HepG2 (cell line): ENCODE measurements at regions of chr7 and their contacts with region 1.

Region 1: GRCh38 chr7:5450549-5451372 is 27.1 kb upstream of the TNRC18 start:
- DNase-seq: peak; percentile 53
- ATAC-seq: peak; percentile 75
- H3K4me3 ChIP-seq: no peak overlapping the region; a peak in 2 of 6 replicates
- H3K27ac ChIP-seq: no peak overlapping the region
- H3K4me1 ChIP-seq: peaks cover 48% of the 10 kb centered on the region
- H3K27me3 ChIP-seq: peaks cover 0 to 4% of the 10 kb centered on the region in 2 experiments; a peak in 4 of 5 replicates
- CTCF ChIP-seq: peak; percentile 95
- EP300 ChIP-seq: no peak
- POLR2A ChIP-seq: no peak
- RAD21 ChIP-seq: peak; percentile 95

Region 2: DNA sequence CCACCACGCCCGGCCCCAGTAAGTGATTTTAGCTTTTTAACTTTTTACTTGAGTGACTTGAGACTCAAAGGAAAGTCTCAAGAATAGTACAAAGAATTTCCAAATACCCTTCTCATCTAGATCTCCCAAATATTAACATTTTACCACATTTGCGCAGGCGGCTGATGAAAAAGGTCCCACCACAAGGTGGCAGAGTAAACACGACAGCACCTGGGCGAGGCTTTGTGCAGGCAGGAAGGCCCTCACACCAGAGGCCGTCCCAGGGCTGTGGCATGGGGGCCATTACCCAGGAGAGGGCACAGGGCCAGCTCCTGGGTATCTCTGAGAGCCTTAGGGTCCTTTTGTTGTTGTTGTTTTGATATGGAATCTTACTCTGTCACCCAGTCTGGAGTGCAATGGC is 310.8 kb before region 1 on chr7:
- CTCF ChIA-PET with region 1: no interaction called
- POLR2A ChIA-PET with region 1: no interaction called
- in situ Hi-C with region 1: loop called (anchors 25 kb)
- intact Hi-C with region 1: no loop called
- DNase-seq: peak; percentile 32
- ATAC-seq: peak; percentile 76
- H3K4me3 ChIP-seq: no peak overlapping the region
- H3K27ac ChIP-seq: no peak overlapping the region
- H3K4me1 ChIP-seq: no peaks in the 10 kb centered on the region
- H3K27me3 ChIP-seq: 0 out of 5 replicates have a peak, but pooled peaks cover 0 to 5% of the 10 kb centered on the region in 2 experiments
- CTCF ChIP-seq: peak; percentile 74
- EP300 ChIP-seq: no peak
- POLR2A ChIP-seq: no peak
- RAD21 ChIP-seq: 0 out of 2 replicates have a peak, but pooled peaks have one; percentile 21

Region 3: GRCh38 chr7:5231811-5232484 is 218.8 kb before region 1 on chr7:
- CTCF ChIA-PET with region 1: no interaction called
- POLR2A ChIA-PET with region 1: no interaction called
- in situ Hi-C with region 1: loop called (anchors 25 kb)
- intact Hi-C with region 1: no loop called
- DNase-seq: no peak
- ATAC-seq: no peak
- H3K4me3 ChIP-seq: no peak overlapping the region
- H3K27ac ChIP-seq: no peak overlapping the region
- H3K4me1 ChIP-seq: no peaks in the 10 kb centered on the region
- H3K27me3 ChIP-seq: no peaks in the 10 kb centered on the region
- CTCF ChIP-seq: no peak
- EP300 ChIP-seq: no peak
- POLR2A ChIP-seq: no peak
- RAD21 ChIP-seq: no peak

Region 4: GRCh38 chr7:5363729-5364128 is 87.0 kb before region 1 on chr7:
- CTCF ChIA-PET with region 1: interaction called, 16 read pairs
- POLR2A ChIA-PET with region 1: interaction called, 4 read pairs
- in situ Hi-C with region 1: loop called (anchors 5 kb)
- intact Hi-C with region 1: loop called (anchors 1 kb)
- DNase-seq: no peak
- ATAC-seq: no peak
- H3K4me3 ChIP-seq: no peak overlapping the region
- H3K27ac ChIP-seq: no peak overlapping the region
- H3K4me1 ChIP-seq: no peaks in the 10 kb centered on the region
- H3K27me3 ChIP-seq: no peaks in the 10 kb centered on the region
- CTCF ChIP-seq: no peak
- EP300 ChIP-seq: no peak
- POLR2A ChIP-seq: no peak
- RAD21 ChIP-seq: no peak

Region 5: GRCh38 chr7:5417106-5418071 is 33.4 kb before region 1 on chr7:
- CTCF ChIA-PET with region 1: no interaction called
- POLR2A ChIA-PET with region 1: interaction called, 20 read pairs
- in situ Hi-C with region 1: no loop called
- intact Hi-C with region 1: no loop called
- DNase-seq: no peak
- ATAC-seq: no peak
- H3K4me3 ChIP-seq: peak overlapping the region in 1 of 3 experiments; percentile 96; a peak in 1 of 6 replicates
- H3K27ac ChIP-seq: peak overlapping the region; percentile 62
- H3K4me1 ChIP-seq: peaks cover 51% of the 10 kb centered on the region
- H3K27me3 ChIP-seq: no peaks in the 10 kb centered on the region; a peak in 1 of 5 replicates
- CTCF ChIP-seq: no peak
- EP300 ChIP-seq: no peak
- POLR2A ChIP-seq: no peak; a peak in 1 of 4 replicates
- RAD21 ChIP-seq: no peak

Region 6: GRCh38 chr7:5423844-5424688 is 26.7 kb before region 1 on chr7:
- CTCF ChIA-PET with region 1: no interaction called
- POLR2A ChIA-PET with region 1: interaction called, 20 read pairs
- in situ Hi-C with region 1: no loop called
- intact Hi-C with region 1: no loop called
- DNase-seq: peak; percentile 95
- ATAC-seq: peak; percentile 38
- H3K4me3 ChIP-seq: peak overlapping the region; percentile 92 to 98 (median 94)
- H3K27ac ChIP-seq: peak overlapping the region; percentile 100
- H3K4me1 ChIP-seq: peaks cover 2% of the 10 kb centered on the region
- H3K27me3 ChIP-seq: no peaks in the 10 kb centered on the region; a peak in 1 of 5 replicates
- CTCF ChIP-seq: no peak
- EP300 ChIP-seq: peak; percentile 37 to 51; a peak in 1 of 4 replicates
- POLR2A ChIP-seq: peak in 1 of 2 experiments; percentile 81; a peak in 2 of 4 replicates
- RAD21 ChIP-seq: no peak